ENCODE measurements at regions of chr2 and their contacts with region 1.

Region 1: DNA sequence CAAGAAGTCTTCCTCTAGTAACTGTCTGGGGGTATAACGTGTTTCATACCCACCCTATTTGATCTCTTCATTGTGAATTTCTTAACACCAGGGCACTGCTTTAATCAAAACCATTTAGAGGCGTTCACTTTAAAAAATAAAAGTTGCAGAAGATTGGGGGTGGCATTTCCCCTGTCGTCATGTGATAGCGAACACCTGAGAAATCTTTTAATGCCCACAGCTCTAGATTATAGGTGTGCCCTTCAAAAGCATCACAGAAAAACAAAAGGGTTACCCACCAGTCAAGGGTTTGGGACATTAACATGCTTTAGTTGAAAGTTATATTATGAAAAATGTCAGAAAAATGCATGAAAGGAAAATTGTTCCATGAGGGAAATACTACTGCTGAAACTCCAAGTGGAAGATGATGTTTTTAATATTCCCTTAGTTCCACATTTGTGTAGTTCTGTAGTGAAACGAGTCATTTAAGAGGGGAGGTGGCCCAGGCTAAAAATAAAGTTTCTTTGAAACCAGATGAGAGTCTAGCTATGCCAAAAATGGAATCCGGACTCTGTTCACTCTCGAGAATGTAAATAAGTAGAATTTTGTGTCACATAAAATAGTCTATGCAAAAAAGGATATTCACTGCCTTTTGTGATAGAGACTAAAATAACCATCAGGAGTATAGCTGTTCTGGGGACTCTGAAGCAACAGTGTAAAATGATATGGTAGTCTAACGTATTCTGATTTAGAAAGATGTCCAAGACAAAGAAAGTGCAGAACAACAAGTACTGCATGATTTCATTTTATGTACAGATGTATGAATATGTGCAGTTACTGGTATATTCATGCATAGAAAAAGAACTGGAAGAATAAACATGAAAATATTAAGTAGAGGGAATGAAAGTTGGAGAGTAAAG is 95.3 kb downstream of the TMEM247 start:
- DNase-seq: no peak
- ATAC-seq: peak in 3 of 4 donors; percentile 68 to 83 (median 78)
- H3K4me3 ChIP-seq: peak overlapping the region; percentile 32
- H3K27ac ChIP-seq: peak overlapping the region; percentile 46
- H3K4me1 ChIP-seq: peaks cover 51% of the 10 kb centered on the region
- H3K27me3 ChIP-seq: no peaks in the 10 kb centered on the region
- CTCF ChIP-seq: no peak

Region 2: GRCh38 chr2:46610021-46610420 is 35.3 kb after region 1 on chr2:
- intact Hi-C with region 1: loop called in 1 of 2 experiments (anchors 5 kb)
- DNase-seq: no peak
- ATAC-seq: no peak
- H3K4me3 ChIP-seq: no peak overlapping the region
- H3K27ac ChIP-seq: no peak overlapping the region
- H3K4me1 ChIP-seq: peaks cover 9% of the 10 kb centered on the region
- H3K27me3 ChIP-seq: no peaks in the 10 kb centered on the region
- CTCF ChIP-seq: no peak

Region 3: DNA sequence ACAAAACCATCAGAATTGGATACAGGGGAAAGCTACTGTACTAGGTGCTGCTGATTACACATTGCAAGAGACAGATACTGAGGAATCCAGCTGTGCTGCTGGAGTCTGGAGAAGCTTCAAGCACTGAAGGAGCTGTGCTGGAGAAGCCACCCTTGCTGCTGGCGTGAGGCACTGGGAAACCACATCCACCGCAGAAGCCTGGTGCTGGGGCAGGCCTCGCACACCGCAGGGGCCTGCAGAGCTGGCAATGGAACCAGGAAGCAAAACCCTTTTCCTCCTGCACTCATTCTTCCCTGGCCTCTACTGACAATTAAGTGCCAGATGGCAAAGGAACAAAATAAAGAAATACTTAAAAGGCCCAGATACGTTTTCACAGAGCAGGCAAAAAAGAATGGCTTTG is 1113.9 kb after region 1 on chr2:
- intact Hi-C with region 1: no loop called
- DNase-seq: no peak
- ATAC-seq: no peak
- H3K4me3 ChIP-seq: no peak overlapping the region
- H3K27ac ChIP-seq: no peak overlapping the region
- H3K4me1 ChIP-seq: no peaks in the 10 kb centered on the region
- H3K27me3 ChIP-seq: no peaks in the 10 kb centered on the region
- CTCF ChIP-seq: no peak